Astrocyte of the cerebellum (primary cell): ENCODE measurements at regions of chr3 and their contacts with region 1.

Region 1: GRCh38 chr3:64224826-64225610 is at the start of gene PRICKLE2:
- DNase-seq: peak; percentile 68
- H3K4me3 ChIP-seq: peak within 1 kb of the TSS; percentile 46
- CTCF ChIP-seq: peak; percentile 27

Region 2: DNA sequence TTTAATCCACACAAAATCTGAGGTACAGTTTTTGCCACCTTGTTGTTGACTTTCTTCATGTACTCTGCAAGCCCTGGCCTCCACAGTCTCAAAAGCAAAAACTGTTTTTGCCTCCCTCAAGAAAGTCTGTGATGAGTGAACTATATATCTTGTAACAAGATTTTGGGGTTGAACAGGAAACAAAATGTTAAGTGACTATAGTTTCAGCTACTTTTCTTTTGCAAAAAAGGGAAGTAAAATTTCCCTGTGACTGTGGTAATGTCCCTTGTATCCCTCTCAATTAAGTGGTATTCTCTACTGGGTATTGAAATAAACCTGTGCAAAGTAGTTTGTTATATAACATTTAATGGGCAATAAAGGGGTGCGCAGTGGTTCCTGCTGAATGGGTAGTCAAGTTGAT is 291.6 kb before region 1 on chr3:
- in situ Hi-C with region 1: no loop called
- DNase-seq: no peak
- H3K4me3 ChIP-seq: no peak overlapping the region
- CTCF ChIP-seq: no peak

Region 3: DNA sequence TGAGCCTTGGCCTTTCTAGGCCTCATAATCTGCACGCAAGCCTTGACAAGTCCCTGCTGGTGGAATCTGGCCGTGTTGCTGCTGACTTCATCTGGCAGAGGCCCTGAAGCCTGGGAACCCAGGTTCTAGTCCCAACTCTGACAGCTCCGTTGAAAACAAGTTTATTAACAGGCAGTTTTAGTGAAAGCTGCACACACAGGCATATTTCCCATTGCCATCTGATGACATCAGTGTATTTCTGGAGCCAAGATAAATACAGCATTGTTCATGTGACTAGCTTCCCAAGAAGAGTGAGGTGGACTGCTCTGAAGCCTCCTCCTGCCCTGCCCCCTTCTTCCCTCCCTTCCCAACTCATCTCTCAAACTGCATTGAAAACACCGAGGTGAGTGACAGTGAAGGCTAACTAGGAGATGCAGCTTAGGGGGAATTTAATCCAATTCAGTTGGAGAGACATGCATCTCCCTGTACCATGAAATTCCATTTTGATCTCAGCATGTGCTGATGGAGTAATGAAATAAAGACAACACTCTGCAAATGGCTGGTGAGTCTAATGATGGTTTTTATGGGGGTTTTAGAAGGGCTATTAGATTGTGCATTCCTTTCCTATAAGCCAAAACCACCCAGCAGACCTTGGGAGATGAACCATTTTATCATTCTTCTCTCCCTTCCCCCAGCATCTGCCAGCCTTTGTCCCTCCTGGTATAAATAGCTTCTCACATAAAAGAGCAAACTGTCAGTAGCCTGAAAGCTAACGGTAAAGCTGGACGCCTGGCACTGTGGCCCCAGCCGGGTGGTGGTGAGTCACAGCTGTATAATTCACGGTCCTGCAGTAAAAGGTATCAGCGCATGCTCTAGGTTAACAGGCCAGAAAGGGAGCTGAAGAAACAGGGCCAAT is 37.7 kb before region 1 on chr3:
- in situ Hi-C with region 1: no loop called
- DNase-seq: peak; percentile 95
- H3K4me3 ChIP-seq: no peak overlapping the region
- CTCF ChIP-seq: peak; percentile 2

Region 4: DNA sequence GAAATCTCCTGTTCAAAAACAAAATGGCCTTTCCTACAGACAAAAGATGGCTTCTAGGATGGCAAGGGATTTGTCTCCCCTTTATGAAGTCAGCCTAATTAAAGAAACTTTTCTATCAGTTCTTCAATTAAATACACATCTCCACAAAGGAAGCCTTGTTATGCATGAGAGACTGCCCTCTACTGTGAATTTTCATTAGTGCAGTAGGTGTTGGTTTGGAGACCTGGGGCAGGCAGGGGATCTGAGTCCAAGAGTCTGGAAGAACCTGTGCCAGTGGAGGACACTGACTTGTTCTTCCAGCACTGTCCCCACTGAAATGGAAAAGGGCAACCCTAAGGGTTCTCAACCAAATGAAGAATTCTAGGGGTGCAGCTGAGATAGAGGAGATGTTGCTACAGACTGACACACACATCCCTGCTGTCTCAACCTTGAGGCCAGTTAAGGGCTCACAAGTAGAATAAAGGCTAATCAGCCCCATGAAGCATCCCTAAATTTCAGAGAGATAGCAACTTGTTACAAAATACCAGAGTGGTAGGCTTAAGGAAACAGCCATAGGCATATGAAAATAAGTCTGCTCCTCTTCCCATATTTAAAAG is 174.3 kb after region 1 on chr3:
- in situ Hi-C with region 1: loop called (anchors 10 kb)
- DNase-seq: peak; percentile 57
- H3K4me3 ChIP-seq: no peak overlapping the region
- CTCF ChIP-seq: peak; percentile 72